ENCODE measurements at regions of chr9 and their contacts with region 1.

Region 1: DNA sequence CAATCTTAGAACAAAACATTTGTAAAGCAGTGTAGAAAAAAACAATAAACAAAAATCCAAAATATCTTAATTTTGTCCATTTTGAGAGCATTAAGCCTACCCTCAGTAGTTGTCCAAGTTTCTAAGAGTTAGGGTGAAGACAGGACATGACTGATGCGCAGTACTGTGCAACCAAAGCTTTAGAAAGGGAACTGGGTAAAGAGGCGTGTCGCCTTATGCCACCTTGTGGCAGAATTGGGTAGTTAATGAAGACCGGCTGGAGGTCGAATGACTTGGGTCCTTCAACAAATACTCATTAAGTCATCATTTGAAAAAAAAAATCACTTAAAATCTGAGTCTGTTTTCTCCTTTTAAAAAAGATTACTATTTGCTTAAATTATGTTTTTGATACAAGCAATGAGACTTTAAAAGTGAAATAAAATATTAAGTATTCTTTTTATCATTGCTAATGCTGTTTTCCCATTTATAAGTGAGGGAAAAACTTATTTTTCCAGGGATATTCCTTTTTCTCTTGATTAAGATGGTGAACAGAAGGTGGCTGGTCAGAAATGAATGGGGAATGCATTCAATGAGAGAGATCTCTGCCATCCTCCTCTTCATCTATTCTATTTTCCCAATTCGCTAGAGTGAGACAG is 3.5 kb upstream of the RNF20 start:
- DNase-seq: peak in 4 of 5 donors; percentile 35 to 64 (median 53)
- ATAC-seq: peak in 3 of 4 donors; percentile 33 to 55 (median 36)
- H3K4me3 ChIP-seq: no peak overlapping the region
- H3K27ac ChIP-seq: no peak overlapping the region
- H3K4me1 ChIP-seq: peaks cover 0 to 21% (median 9%) of the 10 kb centered on the region in 12 donors
- H3K27me3 ChIP-seq: no peaks in the 10 kb centered on the region
- CTCF ChIP-seq: peak; percentile 77 to 93 (median 87)
- POLR2A ChIP-seq: no peak

Region 2: GRCh38 chr9:101458955-101459631 is 71.1 kb before region 1 on chr9:
- intact Hi-C with region 1: loop called (anchors 1 to 2 kb)
- DNase-seq: no peak
- ATAC-seq: peak; percentile 47 to 85 (median 84)
- H3K4me3 ChIP-seq: no peak overlapping the region
- H3K27ac ChIP-seq: no peak overlapping the region
- H3K4me1 ChIP-seq: peaks cover 0 to 2% (median 0%) of the 10 kb centered on the region in 12 donors
- H3K27me3 ChIP-seq: no peaks in the 10 kb centered on the region
- CTCF ChIP-seq: peak; percentile 53 to 79 (median 70)
- POLR2A ChIP-seq: no peak

Region 3: DNA sequence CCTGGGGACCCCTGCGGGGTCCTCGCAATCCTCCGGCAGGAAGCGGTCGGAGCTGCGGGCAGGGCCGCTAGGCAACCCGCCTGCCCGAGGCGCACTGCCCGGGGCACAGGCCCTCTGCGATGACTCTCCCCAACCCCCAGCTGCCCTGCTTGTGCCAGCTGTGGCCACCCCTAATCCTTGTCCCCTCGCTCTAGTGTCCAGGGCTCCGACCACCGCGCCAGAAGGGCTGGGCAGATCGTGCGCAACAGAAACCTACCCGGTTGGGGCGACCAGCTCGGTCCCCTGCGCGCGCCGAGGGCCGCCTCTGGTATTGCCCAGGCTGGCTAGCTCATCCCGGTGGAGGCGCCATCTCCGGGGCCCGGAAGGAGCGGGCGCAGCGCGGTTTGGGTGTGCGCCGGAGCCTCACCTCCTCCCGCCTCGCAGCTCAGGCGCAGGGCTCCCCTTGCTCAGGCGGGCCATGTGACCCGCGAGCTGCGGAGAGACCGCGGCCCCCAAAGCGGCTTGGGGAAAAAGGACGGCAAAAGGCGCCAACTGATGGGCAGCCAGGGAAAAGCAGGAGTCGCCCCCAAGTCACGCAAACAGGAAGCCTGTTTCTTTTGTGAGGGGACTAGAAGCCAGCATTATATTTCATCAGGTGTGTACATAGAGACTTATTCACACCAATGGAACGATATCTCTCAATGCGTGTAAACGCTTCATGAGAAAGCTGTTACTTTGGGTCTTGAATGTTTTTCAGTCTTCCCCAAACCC is 43.3 kb before region 1 on chr9:
- intact Hi-C with region 1: loop called in 1 of 10 experiments (anchors 5 kb)
- DNase-seq: peak; percentile 45 to 71 (median 56)
- ATAC-seq: peak; percentile 54 to 87 (median 86)
- H3K4me3 ChIP-seq: peak overlapping the region; percentile 53 to 84 (median 72)
- H3K27ac ChIP-seq: peak overlapping the region; percentile 76 to 97 (median 90)
- H3K4me1 ChIP-seq: peaks cover 0 to 40% (median 8%) of the 10 kb centered on the region in 12 donors
- H3K27me3 ChIP-seq: peaks cover 0 to 26% (median 0%) of the 10 kb centered on the region in 9 donors
- CTCF ChIP-seq: peak in 6 of 12 donors; percentile 22 to 39 (median 28)
- POLR2A ChIP-seq: no peak

Measured in heart left ventricle (tissue), 16 donors.